ENCODE measurements at regions of chr15 and their contacts with region 1.

Region 1: DNA sequence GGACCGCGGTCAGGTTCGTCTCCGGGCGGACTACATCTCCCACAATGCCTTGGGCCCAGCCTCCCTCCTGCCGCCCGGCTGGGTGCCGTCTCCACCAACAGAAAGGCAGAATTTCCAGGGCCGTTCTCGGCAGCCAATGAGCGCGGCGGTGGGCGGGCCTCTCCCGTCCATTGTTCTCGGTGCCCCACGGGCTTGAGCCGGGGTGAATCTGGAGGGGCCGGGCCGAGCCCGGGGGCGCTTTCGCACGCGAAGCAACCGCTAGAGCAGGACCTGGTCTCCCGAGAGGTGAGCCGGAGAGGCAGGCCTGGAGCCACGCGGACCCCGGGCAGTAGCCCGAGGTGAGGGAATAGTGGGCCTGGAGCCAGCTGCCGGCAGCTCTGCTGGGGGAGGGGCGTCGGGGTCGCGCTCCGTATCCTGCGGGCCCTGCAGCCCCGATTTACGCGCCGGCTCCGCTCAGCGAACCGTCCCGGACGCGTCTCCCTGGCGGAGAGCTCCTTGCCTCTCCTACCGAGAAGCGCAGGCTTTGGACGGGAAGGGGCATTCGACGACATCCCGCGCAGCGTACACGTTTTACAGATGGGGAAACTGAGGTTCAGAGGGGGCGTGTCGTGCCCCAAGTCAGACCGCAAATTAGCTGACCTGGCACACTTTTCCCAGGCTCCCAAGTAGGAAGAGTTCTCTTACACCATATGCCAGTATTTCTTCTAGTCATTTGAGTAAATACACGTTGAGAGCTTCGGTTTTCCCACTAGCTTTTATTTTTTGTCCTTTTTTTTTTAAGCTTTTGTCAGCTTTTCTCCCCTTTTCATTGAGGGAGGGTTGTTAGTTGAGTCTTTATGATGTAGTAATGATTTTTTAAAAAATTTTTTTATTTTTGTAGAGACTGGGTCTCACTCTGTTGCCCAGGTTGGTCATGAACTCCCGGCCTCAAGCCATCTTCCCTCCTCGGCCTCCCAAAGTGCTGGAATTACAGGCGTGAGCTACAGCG is at the start of gene ZSCAN2:
- H3K4me3 ChIP-seq: peak within 1 kb of the TSS; percentile 75
- H3K27ac ChIP-seq: peak within 1 kb of the TSS; percentile 64; the same call in 1 of the 2 replicates
- H3K4me1 ChIP-seq: peaks cover 16% of the 10 kb centered on the region
- CTCF ChIP-seq: peak; percentile 75

Region 2: GRCh38 chr15:84570164-84570735 is 30.9 kb before region 1 on chr15:
- CTCF ChIA-PET with region 1: interaction called, 11 read pairs
- POLR2A ChIA-PET with region 1: interaction called, 6 read pairs
- H3K4me3 ChIP-seq: peak overlapping the region; percentile 82
- H3K27ac ChIP-seq: peak overlapping the region; percentile 92
- H3K4me1 ChIP-seq: peaks cover 9% of the 10 kb centered on the region
- CTCF ChIP-seq: no peak

Region 3: GRCh38 chr15:84588053-84588874 is 12.9 kb before region 1 on chr15:
- CTCF ChIA-PET with region 1: interaction called, 28 read pairs
- POLR2A ChIA-PET with region 1: no interaction called
- H3K4me3 ChIP-seq: peak overlapping the region; percentile 26
- H3K27ac ChIP-seq: no peak overlapping the region
- H3K4me1 ChIP-seq: no peaks in the 10 kb centered on the region
- CTCF ChIP-seq: peak; percentile 86

Region 4: GRCh38 chr15:84616235-84616634 is 15.1 kb after region 1 on chr15:
- CTCF ChIA-PET with region 1: interaction called, 10 read pairs
- POLR2A ChIA-PET with region 1: no interaction called
- H3K4me3 ChIP-seq: no peak overlapping the region
- H3K27ac ChIP-seq: no peak overlapping the region
- H3K4me1 ChIP-seq: no peaks in the 10 kb centered on the region
- CTCF ChIP-seq: no peak

Region 5: DNA sequence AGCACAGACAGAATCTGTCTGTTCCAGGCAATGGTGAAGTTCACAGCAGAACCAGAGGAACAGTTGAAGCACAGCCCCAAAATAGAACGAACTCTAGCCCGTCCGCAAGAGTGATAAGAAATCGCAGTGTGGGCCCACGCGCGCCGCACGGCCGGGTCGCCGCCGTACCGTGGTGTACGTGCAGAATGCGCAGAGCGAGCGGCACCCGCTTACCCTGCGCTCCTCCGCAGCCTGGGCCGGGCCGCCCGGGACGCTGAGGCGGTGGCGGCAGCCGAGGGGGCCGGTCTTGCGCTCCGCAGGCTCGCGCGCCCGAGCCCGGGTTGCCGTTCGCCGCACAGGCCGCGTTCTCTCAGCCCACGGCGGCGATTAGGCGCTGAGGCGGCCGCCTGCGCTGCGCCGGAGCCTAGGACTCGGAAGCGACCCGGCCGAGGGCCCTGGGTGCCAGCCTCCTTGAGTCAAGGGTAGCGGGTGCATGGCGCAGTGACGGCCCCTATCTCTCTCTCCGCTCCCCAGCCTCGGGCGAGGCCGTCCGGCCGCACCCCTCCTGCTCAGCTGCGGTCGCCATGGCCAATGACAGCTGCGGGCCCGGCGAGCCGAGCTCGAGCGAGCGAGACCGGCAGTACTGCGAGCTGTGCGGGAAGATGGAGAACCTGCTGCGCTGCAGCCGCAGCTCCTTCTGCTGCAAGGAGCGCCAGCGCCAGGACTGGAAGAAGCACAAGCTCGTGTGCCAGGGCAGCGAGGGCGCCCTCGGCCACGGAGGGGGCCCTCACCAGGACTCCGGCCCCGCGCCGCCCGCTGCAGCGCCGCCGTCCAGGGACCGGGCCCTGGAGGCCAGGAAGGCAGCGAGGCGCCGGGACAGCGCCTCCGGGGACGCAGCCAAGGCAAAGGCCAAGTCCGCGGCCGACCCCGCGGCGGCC is 32.4 kb after region 1 on chr15:
- CTCF ChIA-PET with region 1: interaction called, 29 read pairs
- POLR2A ChIA-PET with region 1: interaction called, 29 read pairs
- H3K4me3 ChIP-seq: peak overlapping the region; percentile 68
- H3K27ac ChIP-seq: peak overlapping the region; percentile 90
- H3K4me1 ChIP-seq: peaks cover 4% of the 10 kb centered on the region
- CTCF ChIP-seq: peak; percentile 36; the same call in 1 of the 2 replicates

Region 6: GRCh38 chr15:84658080-84658787 is 57.1 kb after region 1 on chr15 and contains the start of gene NMB:
- CTCF ChIA-PET with region 1: interaction called, 19 read pairs
- POLR2A ChIA-PET with region 1: interaction called, 9 read pairs
- H3K4me3 ChIP-seq: peak within 1 kb of the TSS; percentile 35
- H3K27ac ChIP-seq: peak within 1 kb of the TSS; percentile 46; the same call in 1 of the 2 replicates
- H3K4me1 ChIP-seq: peaks cover 14% of the 10 kb centered on the region
- CTCF ChIP-seq: peak; percentile 92

Region 7: GRCh38 chr15:84685304-84685703 is 84.2 kb after region 1 on chr15:
- CTCF ChIA-PET with region 1: no interaction called
- POLR2A ChIA-PET with region 1: no interaction called
- H3K4me3 ChIP-seq: no peak overlapping the region
- H3K27ac ChIP-seq: no peak overlapping the region
- H3K4me1 ChIP-seq: no peaks in the 10 kb centered on the region
- CTCF ChIP-seq: no peak

Region 8: GRCh38 chr15:84725001-84725491 is 123.9 kb after region 1 on chr15:
- CTCF ChIA-PET with region 1: no interaction called
- POLR2A ChIA-PET with region 1: no interaction called
- H3K4me3 ChIP-seq: no peak overlapping the region
- H3K27ac ChIP-seq: 0 out of 2 replicates have a peak overlapping the region, but pooled peaks have one; percentile 4
- H3K4me1 ChIP-seq: no peaks in the 10 kb centered on the region
- CTCF ChIP-seq: no peak

Region 9: DNA sequence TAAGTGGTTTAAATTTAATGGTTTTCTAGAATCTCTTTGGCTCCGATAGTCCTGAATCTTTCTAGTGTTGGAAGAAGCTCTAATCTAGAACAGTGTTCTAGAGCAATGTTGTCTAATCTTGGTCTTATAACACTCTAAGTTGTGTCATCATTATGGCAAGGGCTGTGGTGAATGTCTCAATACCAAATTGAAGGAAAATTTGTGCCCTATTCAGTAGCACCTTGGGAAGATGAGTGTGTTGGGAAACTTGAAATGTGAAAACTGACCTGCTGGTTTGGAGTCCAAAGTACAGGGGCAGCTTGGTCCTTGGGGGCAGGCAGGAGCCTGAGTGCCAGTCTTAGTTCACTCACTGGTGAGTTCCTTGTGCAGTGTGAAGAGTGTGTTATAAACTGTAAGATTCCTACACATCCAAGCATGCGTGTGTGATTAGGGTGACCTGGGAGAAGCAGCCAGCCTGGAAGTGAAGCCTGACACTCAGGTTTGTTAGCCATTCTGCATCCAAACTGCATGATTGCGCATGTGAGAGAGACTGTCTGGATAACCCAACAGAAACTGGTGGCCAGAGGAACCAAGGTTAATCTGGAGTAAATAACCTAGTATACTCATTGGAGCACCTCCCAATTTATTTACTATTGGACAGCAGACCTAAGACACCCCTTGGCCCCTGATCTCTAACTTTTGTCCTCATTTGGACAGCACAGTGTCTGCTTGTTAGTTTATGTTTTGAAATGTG is 161.9 kb after region 1 on chr15:
- CTCF ChIA-PET with region 1: no interaction called
- POLR2A ChIA-PET with region 1: no interaction called
- H3K4me3 ChIP-seq: no peak overlapping the region
- H3K27ac ChIP-seq: no peak overlapping the region
- H3K4me1 ChIP-seq: peaks cover 17% of the 10 kb centered on the region
- CTCF ChIP-seq: no peak

Measured in HEK293 (cell line).